CD4-positive, alpha-beta memory T cell (primary cell): ENCODE measurements at regions of chr19 and their contacts with region 1.

Region 1: GRCh38 chr19:13986348-13986904 is 19.7 kb downstream of the RFX1 start:
- DNase-seq: peak; percentile 96 to 100 (median 98)
- H3K4me3 ChIP-seq: peak overlapping the region; percentile 43 to 49
- H3K4me3 Mint-ChIP-seq: peak overlapping the region; percentile 69 to 93 (median 74)
- H3K27ac ChIP-seq: peak overlapping the region; percentile 95
- H3K27ac Mint-ChIP-seq: peak overlapping the region; percentile 95 to 100 (median 98)
- H3K4me1 ChIP-seq: peaks cover 84% of the 10 kb centered on the region
- H3K4me1 Mint-ChIP-seq: peaks cover 35 to 93% (median 65%) of the 10 kb centered on the region in 4 donors
- H3K27me3 ChIP-seq: no peaks in the 10 kb centered on the region
- H3K27me3 Mint-ChIP-seq: no peaks in the 10 kb centered on the region

Region 2: GRCh38 chr19:13905938-13906904 is 80.2 kb before region 1 on chr19 and contains the starts of genes BRME1 and CC2D1A:
- CTCF ChIA-PET with region 1: no interaction called
- POLR2A ChIA-PET with region 1: interaction called, 3 read pairs
- intact Hi-C with region 1: loop called (anchors 1 kb)
- DNase-seq: peak; percentile 91 to 92 (median 92)
- H3K4me3 ChIP-seq: peak within 1 kb of the TSS; percentile 34 to 79
- H3K4me3 Mint-ChIP-seq: peak within 1 kb of the TSS; percentile 82 to 93 (median 88)
- H3K27ac ChIP-seq: peak within 1 kb of the TSS; percentile 77
- H3K27ac Mint-ChIP-seq: peak within 1 kb of the TSS; percentile 73 to 98 (median 94)
- H3K4me1 ChIP-seq: peaks cover 15% of the 10 kb centered on the region
- H3K4me1 Mint-ChIP-seq: peaks cover 10 to 21% (median 13%) of the 10 kb centered on the region in 4 donors
- H3K27me3 ChIP-seq: no peaks in the 10 kb centered on the region
- H3K27me3 Mint-ChIP-seq: no peaks in the 10 kb centered on the region
- total RNA-seq, gene BRME1: 3.1 to 3.8 TPM
- total RNA-seq, gene CC2D1A: 32.9 to 37.1 TPM

Region 3: DNA sequence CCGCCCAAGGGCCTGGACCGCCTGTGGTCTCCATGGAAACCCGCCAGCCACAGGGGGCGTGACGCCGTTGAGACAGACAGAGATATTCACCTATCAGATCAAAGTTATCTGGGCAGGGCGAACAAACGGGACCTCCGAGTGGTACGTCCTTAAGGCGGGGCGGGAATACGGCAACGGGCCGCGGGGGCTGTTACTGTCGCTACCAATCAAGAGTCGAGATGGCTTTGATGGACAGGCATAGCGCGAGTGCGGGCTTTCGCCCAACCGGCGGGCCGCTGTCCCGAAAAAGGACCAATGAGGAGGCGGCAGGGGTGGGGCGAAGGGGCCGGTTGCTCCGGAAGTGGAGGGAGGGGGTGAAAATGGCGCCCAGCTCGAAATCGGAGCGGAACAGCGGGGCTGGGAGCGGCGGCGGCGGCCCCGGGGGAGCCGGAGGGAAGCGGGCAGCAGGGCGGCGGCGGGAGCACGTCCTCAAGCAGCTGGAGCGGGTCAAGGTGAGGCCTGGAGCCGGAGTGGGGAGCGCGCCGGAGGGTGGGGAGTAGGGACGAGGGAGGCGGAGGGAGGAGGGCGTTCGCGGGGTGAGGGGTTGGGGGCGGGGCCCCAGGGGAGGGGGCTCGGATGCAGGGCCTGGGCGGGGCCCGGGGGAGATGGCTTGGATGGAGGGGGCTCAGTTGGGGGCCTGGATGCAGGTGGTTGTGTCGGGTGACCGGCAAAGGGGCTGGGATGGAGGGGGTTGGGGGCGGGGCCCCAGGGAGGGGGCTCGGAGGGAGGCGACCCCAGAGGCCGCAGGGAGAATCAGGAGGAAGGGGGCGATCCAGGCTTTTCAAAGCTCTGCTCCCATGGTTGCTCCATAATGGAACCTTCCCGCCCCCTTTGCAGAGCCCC is 34.0 kb before region 1 on chr19 and contains the start of gene DCAF15:
- CTCF ChIA-PET with region 1: no interaction called
- POLR2A ChIA-PET with region 1: interaction called, 39 read pairs
- intact Hi-C with region 1: loop called (anchors 1 kb)
- DNase-seq: peak; percentile 98 to 100 (median 99)
- H3K4me3 ChIP-seq: peak within 1 kb of the TSS; percentile 43 to 71
- H3K4me3 Mint-ChIP-seq: peak within 1 kb of the TSS; percentile 88 to 96 (median 92)
- H3K27ac ChIP-seq: peak within 1 kb of the TSS; percentile 80
- H3K27ac Mint-ChIP-seq: peak within 1 kb of the TSS; percentile 86 to 99 (median 96)
- H3K4me1 ChIP-seq: peaks cover 22% of the 10 kb centered on the region
- H3K4me1 Mint-ChIP-seq: peaks cover 12 to 28% (median 17%) of the 10 kb centered on the region in 4 donors
- H3K27me3 ChIP-seq: no peaks in the 10 kb centered on the region
- H3K27me3 Mint-ChIP-seq: no peaks in the 10 kb centered on the region
- total RNA-seq, gene DCAF15: 92.9 to 96.7 TPM

Region 4: DNA sequence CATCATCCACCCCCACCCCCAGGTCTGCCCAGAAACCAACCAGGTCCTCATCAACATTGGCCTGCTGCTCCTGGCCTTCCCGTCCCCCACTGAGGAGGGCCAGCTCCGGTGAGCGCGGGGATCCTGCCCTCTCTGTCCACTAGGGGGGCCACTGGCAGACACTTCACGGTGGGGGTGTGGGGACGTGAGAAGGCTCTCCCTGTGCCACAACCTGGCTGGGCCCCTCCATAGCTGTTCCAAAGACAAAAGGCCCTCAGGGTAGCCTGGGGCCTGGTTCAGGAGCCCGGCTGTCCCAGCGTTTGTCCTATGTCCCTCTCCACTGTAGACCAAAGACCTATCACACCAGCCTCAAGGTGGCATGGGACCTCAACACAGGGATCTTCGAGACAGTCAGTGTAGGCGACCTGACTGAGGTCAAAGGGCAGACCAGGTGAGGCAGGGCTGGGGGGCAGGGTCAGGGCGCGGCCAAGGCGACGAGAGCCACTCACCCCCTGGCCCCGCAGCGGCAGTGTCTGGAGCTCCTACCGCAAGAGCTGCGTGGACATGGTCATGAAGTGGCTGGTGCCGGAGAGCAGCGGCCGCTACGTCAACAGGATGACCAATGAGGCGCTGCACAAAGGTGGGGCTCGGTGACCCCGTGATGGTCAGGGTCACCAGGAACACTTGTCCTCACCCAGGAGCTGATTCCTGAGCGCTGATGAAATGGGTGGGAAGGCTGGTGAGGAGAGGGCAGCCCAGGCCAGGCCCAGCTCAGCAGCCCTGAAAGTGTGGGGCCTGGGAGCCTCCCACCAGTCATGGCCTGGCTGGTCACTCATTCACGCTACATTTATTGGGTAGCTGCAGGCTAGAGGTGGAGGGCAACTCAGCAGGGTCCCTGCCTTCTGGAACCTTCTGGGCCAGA is 26.2 kb before region 1 on chr19:
- CTCF ChIA-PET with region 1: no interaction called
- POLR2A ChIA-PET with region 1: interaction called, 11 read pairs
- intact Hi-C with region 1: no loop called
- DNase-seq: no peak
- H3K4me3 ChIP-seq: no peak overlapping the region
- H3K4me3 Mint-ChIP-seq: no peak overlapping the region
- H3K27ac ChIP-seq: no peak overlapping the region
- H3K27ac Mint-ChIP-seq: peak overlapping the region in 1 of 7 donors; percentile 68
- H3K4me1 ChIP-seq: no peaks in the 10 kb centered on the region
- H3K4me1 Mint-ChIP-seq: peaks cover 0 to 3% (median 0%) of the 10 kb centered on the region in 4 donors
- H3K27me3 ChIP-seq: no peaks in the 10 kb centered on the region
- H3K27me3 Mint-ChIP-seq: no peaks in the 10 kb centered on the region

Region 5: DNA sequence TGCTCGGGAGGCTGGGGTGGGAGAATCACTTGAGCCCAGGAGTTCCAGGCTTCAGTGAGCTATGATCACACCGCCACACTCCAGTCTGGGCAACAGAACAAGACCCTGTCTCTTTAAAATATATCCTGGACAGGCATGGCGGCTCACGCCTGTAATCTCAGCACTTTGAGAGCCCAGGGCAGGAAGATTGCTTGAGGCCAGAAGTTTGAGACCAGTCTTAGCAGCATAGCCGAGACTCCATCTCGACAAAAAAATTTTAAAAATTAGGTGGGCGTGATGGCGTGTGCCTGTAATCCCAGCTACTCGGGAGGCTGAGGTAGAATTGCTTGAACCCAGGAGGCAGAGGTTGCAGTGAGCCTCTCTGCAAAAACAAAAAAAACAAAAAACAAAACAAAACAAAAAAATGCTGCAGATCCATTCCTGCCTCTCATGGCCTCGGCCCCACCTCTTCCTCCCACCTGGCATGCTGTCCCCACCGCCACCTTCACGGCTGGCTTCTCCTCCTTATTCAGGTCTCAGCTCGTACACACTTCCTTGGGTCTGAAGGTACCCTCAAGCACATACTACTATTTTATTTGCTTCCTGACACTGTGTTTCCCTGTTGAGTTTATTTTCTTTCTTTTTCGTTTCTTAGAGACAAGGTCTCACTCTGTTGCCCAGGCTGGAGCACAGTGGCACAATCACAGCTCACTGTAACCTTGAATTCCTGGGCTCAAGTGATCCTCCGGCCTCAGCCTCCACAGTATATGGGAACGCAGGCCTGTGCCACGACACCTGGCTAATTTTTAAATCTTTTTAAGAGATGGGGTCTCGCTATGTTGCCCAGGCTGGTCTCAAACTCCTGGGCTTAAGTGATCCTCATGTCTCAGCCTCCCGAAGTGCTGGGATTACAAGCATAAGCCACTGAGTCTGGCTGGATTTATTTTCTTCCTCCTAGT is 14.5 kb after region 1 on chr19:
- CTCF ChIA-PET with region 1: interaction called, 43 read pairs
- POLR2A ChIA-PET with region 1: interaction called, 200 read pairs
- intact Hi-C with region 1: loop called (anchors 1 kb)
- DNase-seq: no peak
- H3K4me3 ChIP-seq: no peak overlapping the region
- H3K4me3 Mint-ChIP-seq: peak overlapping the region in 6 of 8 donors; percentile 4 to 69 (median 51)
- H3K27ac ChIP-seq: peak overlapping the region; percentile 47
- H3K27ac Mint-ChIP-seq: peak overlapping the region; percentile 82 to 98 (median 96)
- H3K4me1 ChIP-seq: peaks cover 58% of the 10 kb centered on the region
- H3K4me1 Mint-ChIP-seq: peaks cover 34 to 64% (median 45%) of the 10 kb centered on the region in 4 donors
- H3K27me3 ChIP-seq: no peaks in the 10 kb centered on the region
- H3K27me3 Mint-ChIP-seq: no peaks in the 10 kb centered on the region

Region 6: GRCh38 chr19:14848822-14849221 is 862.4 kb after region 1 on chr19 and contains the start of gene OR7A10:
- CTCF ChIA-PET with region 1: no interaction called
- POLR2A ChIA-PET with region 1: no interaction called
- intact Hi-C with region 1: no loop called
- DNase-seq: no peak
- H3K4me3 ChIP-seq: no peak within 1 kb of the TSS
- H3K4me3 Mint-ChIP-seq: no peak within 1 kb of the TSS
- H3K27ac ChIP-seq: no peak within 1 kb of the TSS
- H3K27ac Mint-ChIP-seq: peak within 1 kb of the TSS in 1 of 7 donors; percentile 6
- H3K4me1 ChIP-seq: no peaks in the 10 kb centered on the region
- H3K4me1 Mint-ChIP-seq: no peaks in the 10 kb centered on the region
- H3K27me3 ChIP-seq: no peaks in the 10 kb centered on the region
- H3K27me3 Mint-ChIP-seq: peaks cover 22 to 23% of the 10 kb centered on the region in 2 donors
- total RNA-seq, gene OR7A10: not detected